Sciatic nerve (tissue), 2 donors: ENCODE measurements at regions of chr16 and their contacts with region 1.

Region 1: GRCh38 chr16:5801396-5801795 is 703.8 kb upstream of the EEF2KMT start:
- DNase-seq: no peak
- ATAC-seq: no peak

Region 2: DNA sequence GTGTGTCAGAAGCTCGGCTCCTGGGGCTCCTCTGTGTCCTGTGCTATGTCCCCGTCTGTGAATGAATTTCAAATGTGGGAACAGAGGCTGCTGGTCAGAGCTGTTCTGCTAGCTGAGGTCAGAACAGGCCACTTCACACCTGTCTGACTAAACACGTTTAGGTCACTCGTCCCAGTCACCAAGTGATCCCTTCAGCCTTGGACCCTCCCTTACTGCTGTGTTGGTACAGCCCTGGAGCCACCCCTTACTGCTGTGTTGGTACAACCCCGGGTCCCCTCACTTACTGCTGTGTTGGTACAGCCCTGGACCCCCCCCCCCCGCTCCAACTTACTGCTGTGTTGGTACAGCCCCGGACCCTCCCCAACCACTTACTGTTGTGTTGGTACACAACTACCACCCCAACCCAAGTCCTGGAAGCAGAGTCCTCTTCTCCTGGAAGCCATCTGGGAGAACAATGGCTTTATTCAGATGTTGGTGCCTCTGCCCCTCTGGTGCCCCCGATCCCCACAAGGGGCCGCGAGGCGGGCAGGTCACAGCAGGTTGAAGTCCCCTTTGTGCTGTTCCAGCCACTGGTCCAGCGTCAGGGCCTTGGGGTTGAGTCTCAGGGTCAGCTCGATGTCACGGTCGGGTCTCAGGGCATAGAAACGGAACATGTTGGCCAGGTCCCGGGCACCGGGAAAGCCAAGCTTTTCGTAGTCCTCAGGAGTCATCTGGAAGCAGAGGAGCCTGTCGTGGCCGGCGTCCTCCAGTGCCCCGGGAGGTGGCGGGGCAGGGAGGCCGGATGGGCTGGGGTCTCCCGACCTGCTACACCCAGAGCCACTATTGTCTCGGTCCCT is 1339.9 kb before region 1 on chr16:
- intact Hi-C with region 1: no loop called
- DNase-seq: no peak
- ATAC-seq: no peak

Region 3: GRCh38 chr16:5175266-5175665 is 626.1 kb before region 1 on chr16:
- intact Hi-C with region 1: loop called (anchors 10 kb)
- DNase-seq: no peak
- ATAC-seq: no peak

Region 4: DNA sequence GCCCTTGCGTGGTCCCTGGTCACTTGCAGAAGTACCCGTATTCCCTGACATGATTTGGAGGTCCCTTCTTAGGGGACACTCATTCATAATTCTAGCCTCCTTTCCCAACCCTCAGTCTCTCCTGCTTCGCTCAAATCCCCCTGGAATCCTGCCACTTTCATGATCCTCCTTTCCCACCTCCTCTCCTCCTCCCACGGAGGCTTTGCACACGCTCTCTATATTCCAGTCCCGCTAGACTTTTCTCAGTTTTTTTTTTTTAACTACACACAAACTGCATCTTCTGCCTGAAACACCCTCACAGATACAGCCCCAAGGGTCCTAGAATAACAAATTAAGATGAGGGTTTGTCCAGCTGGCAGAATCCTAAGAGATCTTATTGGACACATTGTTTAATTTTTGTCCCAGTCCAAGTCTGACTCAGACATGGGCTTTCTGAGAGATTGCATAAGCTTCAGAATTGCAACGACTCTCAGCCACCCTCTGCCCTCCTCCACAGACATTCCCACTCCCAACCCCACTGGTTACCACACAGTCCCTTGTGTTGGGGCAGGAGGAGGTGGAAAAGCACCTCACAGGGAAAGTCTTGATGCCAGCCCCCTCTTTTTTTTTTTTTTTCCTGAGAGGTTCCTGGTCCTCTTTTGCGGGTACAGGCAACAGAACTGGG is 35.7 kb after region 1 on chr16:
- intact Hi-C with region 1: no loop called
- DNase-seq: no peak
- ATAC-seq: no peak

Region 5: GRCh38 chr16:5905935-5906334 is 104.5 kb after region 1 on chr16:
- intact Hi-C with region 1: no loop called
- DNase-seq: no peak
- ATAC-seq: no peak

Region 6: GRCh38 chr16:5965321-5965720 is 163.9 kb after region 1 on chr16:
- intact Hi-C with region 1: no loop called
- DNase-seq: no peak
- ATAC-seq: no peak